Gastrocnemius medialis (tissue), 4 donors: ENCODE measurements at regions of chr4 and their contacts with region 1.

Region 1: GRCh38 chr4:112231779-112232713 is at the start of gene AP1AR:
- DNase-seq: peak; percentile 60 to 76
- ATAC-seq: peak; percentile 76 to 78
- H3K4me3 ChIP-seq: peak within 1 kb of the TSS; percentile 96 to 100 (median 99)
- H3K27ac ChIP-seq: peak within 1 kb of the TSS; percentile 98 to 100 (median 99)
- H3K4me1 ChIP-seq: peaks cover 34 to 42% of the 10 kb centered on the region in 2 donors
- H3K27me3 ChIP-seq: no peaks in the 10 kb centered on the region
- CTCF ChIP-seq: peak in 3 of 5 experiments; percentile 17 to 56 (median 22)
- POLR2A ChIP-seq: peak; percentile 88 to 92
- total RNA-seq, gene AP1AR: 8.9 to 21.5 (median 15.2) TPM

Region 2: GRCh38 chr4:112145326-112145819 is 86.7 kb before region 1 on chr4 and contains the start of gene FAM241A:
- in situ Hi-C with region 1: no loop called
- intact Hi-C with region 1: loop called (anchors 1 kb)
- DNase-seq: peak; percentile 75 to 81
- ATAC-seq: peak; percentile 88 to 91
- H3K4me3 ChIP-seq: peak within 1 kb of the TSS; percentile 69 to 91 (median 85)
- H3K27ac ChIP-seq: peak within 1 kb of the TSS; percentile 79 to 86 (median 82)
- H3K4me1 ChIP-seq: peaks cover 5 to 24% of the 10 kb centered on the region in 2 donors
- H3K27me3 ChIP-seq: no peaks in the 10 kb centered on the region
- CTCF ChIP-seq: no peak
- POLR2A ChIP-seq: peak; percentile 84 to 92
- total RNA-seq, gene FAM241A: 2.3 to 7.0 (median 3.3) TPM

Region 3: GRCh38 chr4:112214390-112215264 is 17.4 kb before region 1 on chr4:
- in situ Hi-C with region 1: no loop called
- intact Hi-C with region 1: loop called (anchors 1 kb)
- DNase-seq: no peak
- ATAC-seq: peak in 1 of 2 donors; percentile 49
- H3K4me3 ChIP-seq: no peak overlapping the region
- H3K27ac ChIP-seq: no peak overlapping the region
- H3K4me1 ChIP-seq: no peaks in the 10 kb centered on the region
- H3K27me3 ChIP-seq: no peaks in the 10 kb centered on the region
- CTCF ChIP-seq: peak; percentile 27 to 55 (median 28)
- POLR2A ChIP-seq: no peak

Region 4: DNA sequence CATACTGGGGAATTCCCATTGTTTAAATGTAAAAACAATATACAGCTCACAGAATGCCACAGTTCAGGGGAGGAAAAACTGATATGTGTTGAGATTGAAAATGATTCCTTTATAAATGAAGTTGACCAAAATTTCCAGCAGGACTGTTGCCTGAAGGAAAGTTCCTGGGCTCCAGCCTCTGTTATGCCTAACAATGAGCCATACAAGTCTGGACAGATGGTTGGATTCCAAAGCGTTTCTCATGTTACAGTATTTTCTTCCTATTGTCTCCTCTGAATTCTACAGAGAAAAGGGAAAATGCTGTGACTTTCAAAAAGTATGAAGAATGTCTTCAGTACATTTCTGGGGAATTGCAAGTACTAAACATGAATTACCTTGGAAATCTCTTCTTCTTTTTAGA is 138.4 kb after region 1 on chr4:
- in situ Hi-C with region 1: no loop called
- intact Hi-C with region 1: no loop called
- DNase-seq: no peak
- ATAC-seq: no peak
- H3K4me3 ChIP-seq: no peak overlapping the region
- H3K27ac ChIP-seq: no peak overlapping the region
- H3K4me1 ChIP-seq: no peaks in the 10 kb centered on the region
- H3K27me3 ChIP-seq: no peaks in the 10 kb centered on the region
- CTCF ChIP-seq: no peak
- POLR2A ChIP-seq: no peak

Region 5: GRCh38 chr4:112636688-112637551 is 404.9 kb after region 1 on chr4 and contains the starts of genes LARP7 and ZGRF1:
- in situ Hi-C with region 1: no loop called
- intact Hi-C with region 1: loop called (anchors 1 kb)
- DNase-seq: peak; percentile 97 to 98
- ATAC-seq: peak; percentile 96 to 97
- H3K4me3 ChIP-seq: peak within 1 kb of the TSS; percentile 66 to 86 (median 72)
- H3K27ac ChIP-seq: peak within 1 kb of the TSS; percentile 87 to 93 (median 91)
- H3K4me1 ChIP-seq: peaks cover 34 to 41% of the 10 kb centered on the region in 2 donors
- H3K27me3 ChIP-seq: no peaks in the 10 kb centered on the region
- CTCF ChIP-seq: peak; percentile 92 to 100 (median 99)
- POLR2A ChIP-seq: peak; percentile 49 to 52
- total RNA-seq, gene LARP7: 28.5 to 40.3 (median 31.3) TPM
- total RNA-seq, gene ZGRF1: 0.55 to 2.9 (median 1.8) TPM